GM10248 (cell line): ENCODE measurements at regions of chr2 and their contacts with region 1.

Region 1: DNA sequence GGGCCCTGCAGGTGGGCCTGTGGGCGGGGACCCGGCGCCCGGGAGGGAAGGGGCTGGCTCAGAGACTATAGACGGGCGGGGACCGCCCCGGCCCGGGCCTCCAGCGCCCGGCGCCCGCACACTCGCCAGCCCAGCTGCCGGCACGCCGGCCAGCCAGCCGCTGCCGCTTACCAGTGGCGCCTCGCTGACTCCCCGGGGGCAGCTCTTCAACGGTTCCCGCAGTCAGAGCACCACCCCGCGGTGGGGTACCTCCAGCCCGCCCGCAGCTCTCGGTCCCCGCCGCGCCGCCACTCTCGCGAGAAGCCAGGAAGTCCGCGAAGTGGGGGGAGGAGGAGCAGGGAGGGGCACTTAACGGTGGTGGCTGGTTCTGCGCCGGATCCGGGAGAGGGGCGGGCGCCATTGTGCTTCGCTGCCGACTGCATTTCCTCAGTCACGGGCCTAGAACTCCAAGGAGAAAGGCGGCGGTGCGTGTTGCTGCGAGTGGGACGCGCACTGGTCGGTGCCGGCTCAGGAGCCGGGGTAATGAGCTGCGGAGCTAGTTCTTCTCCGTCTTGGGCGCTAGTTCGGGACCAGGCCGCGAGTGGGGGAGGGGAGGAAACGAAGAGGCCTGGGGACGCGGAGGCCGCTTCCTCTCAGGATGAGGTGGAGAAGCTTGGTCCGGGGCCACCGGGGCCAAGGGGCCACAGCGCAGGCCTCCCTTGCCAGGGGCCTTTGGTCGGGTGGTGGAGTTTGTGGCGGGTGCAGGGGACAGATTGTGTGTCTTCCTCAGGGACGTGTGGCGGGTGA is at the start of gene MARCHF7:
- DNase-seq: peak; percentile 98
- CTCF ChIP-seq: peak; percentile 79

Region 2: GRCh38 chr2:159615140-159615951 is 97.0 kb before region 1 on chr2:
- CTCF ChIA-PET with region 1: interaction called, 6 read pairs
- POLR2A ChIA-PET with region 1: interaction called, 12 read pairs
- DNase-seq: peak; percentile 74
- CTCF ChIP-seq: no peak

Region 3: DNA sequence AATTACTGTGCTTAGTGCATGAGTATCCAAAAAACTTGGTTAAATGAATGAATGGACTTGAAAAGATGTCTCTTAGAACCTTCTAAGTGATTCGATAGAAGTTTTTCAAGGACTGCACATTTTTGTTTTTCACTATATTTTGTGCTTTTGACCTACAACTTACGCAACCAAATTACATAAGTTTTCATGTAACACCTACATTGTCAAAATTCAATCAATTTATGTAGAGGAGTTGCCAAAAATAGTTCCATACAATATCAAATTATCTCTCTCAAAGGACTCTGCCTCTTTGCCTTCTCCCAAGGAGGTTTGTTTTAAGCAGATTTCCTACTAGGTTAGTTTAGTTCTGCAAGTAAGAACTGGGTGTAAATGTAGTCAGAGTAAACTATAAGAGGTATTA is 10.2 kb after region 1 on chr2:
- CTCF ChIA-PET with region 1: interaction called, 17 read pairs
- POLR2A ChIA-PET with region 1: no interaction called
- DNase-seq: no peak
- CTCF ChIP-seq: no peak